ENCODE measurements at regions of chr6 and their contacts with region 1.

Region 1: GRCh38 chr6:34953061-34954025 is 64.3 kb downstream of the ANKS1A start:
- DNase-seq: no peak
- H3K4me3 ChIP-seq: no peak overlapping the region
- H3K27ac ChIP-seq: no peak overlapping the region
- H3K4me1 ChIP-seq: peaks cover 13% of the 10 kb centered on the region
- H3K27me3 ChIP-seq: no peaks in the 10 kb centered on the region
- CTCF ChIP-seq: no peak
- EP300 ChIP-seq: no peak
- POLR2A ChIP-seq: no peak

Region 2: GRCh38 chr6:34887753-34888513 is 65.4 kb before region 1 on chr6 and contains the start of gene TAF11:
- intact Hi-C with region 1: loop called in 1 of 4 experiments (anchors 10 kb)
- DNase-seq: peak; percentile 92 to 95 (median 93)
- H3K4me3 ChIP-seq: peak within 1 kb of the TSS; percentile 88
- H3K27ac ChIP-seq: peak within 1 kb of the TSS; percentile 75 to 79
- H3K4me1 ChIP-seq: peaks cover 5% of the 10 kb centered on the region
- H3K27me3 ChIP-seq: no peaks in the 10 kb centered on the region
- CTCF ChIP-seq: no peak
- EP300 ChIP-seq: no peak
- POLR2A ChIP-seq: peak; percentile 83
- total RNA-seq, gene TAF11: 16.0 to 25.0 (median 19.1) TPM

Region 3: DNA sequence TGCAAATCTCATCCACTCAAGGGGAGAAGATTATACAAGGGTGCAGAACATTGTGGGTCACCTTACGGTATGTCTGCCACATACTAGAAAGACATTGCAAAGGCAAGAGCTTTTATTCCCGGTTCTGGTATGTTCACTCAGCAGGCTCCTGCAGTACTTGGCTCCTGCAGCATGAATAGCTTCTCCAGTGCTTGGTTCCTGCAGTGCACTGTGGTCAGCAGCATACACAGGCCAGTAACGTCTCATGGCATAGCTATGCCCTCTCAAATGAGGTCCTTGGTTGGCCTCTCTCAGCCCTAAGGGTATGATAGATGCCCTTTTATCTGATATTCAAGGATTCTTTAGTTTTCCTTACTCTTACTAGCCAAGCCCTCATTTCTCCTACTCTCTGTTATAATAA is 175.2 kb after region 1 on chr6:
- intact Hi-C with region 1: no loop called
- DNase-seq: no peak
- H3K4me3 ChIP-seq: no peak overlapping the region
- H3K27ac ChIP-seq: no peak overlapping the region
- H3K4me1 ChIP-seq: no peaks in the 10 kb centered on the region
- H3K27me3 ChIP-seq: no peaks in the 10 kb centered on the region
- CTCF ChIP-seq: no peak
- EP300 ChIP-seq: no peak
- POLR2A ChIP-seq: no peak

Measured in ovary (tissue), 10 donors.